K562 (cell line): ENCODE measurements at regions of chr19 and their contacts with region 1.

Region 1: GRCh38 chr19:42563352-42564210 is 31.1 kb downstream of the CEACAM8 start:
- DNase-seq: peak; percentile 45 to 66 (median 63)
- ATAC-seq: peak; percentile 93
- H3K4me3 ChIP-seq: no peak overlapping the region
- H3K27ac ChIP-seq: no peak overlapping the region
- H3K4me1 ChIP-seq: no peaks in the 10 kb centered on the region
- H3K27me3 ChIP-seq: no peaks in the 10 kb centered on the region
- CTCF ChIP-seq: peak; percentile 69 to 71 (median 70)
- EP300 ChIP-seq: no peak
- POLR2A ChIP-seq: no peak
- RAD21 ChIP-seq: peak; percentile 17 to 57; a peak in 2 of 4 replicates

Region 2: DNA sequence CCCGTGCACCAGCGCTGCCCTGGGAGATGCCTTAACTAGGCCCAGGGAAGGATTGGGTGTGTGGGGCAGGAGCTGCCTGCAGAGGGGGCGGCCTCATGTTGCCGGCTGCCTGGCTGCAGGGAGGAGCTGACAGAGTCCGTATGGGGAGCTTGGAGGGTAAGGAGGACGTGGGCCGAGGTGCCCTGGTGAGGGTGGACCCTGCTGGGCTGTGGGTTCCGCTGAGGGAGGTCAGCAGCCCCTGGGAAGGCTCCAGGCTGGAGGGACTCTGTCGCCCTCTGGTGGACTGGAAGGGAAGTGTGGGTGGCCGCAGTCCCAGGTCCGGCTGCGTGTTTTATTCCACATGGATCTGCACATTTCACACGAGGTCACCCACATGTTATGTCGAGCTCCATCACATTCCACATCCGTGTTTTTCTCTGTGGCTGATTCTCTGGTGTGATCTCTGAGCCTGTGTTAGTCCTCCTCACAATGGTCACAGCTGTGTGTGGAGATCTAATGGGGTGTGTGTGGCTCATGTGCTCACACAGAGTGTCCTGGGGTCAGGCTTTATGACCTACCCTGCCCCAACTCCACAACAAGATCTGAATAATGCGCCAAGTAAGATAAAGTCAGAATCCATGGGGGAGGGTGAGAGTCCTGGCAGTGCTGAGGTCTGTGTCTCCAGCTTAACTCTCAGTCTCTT is 33.0 kb after region 1 on chr19:
- CTCF ChIA-PET with region 1: interaction called, 4 read pairs
- POLR2A ChIA-PET with region 1: no interaction called
- in situ Hi-C with region 1: no loop called
- intact Hi-C with region 1: loop called (anchors 1 kb)
- DNase-seq: peak; percentile 47 to 78 (median 68)
- ATAC-seq: peak; percentile 95
- H3K4me3 ChIP-seq: no peak overlapping the region
- H3K27ac ChIP-seq: no peak overlapping the region
- H3K4me1 ChIP-seq: peaks cover 0 to 5% of the 10 kb centered on the region in 2 experiments; a peak in 1 of 5 replicates
- H3K27me3 ChIP-seq: peaks cover 0 to 4% of the 10 kb centered on the region in 2 experiments; a peak in 1 of 5 replicates
- CTCF ChIP-seq: peak; percentile 81 to 92 (median 84)
- EP300 ChIP-seq: no peak
- POLR2A ChIP-seq: no peak
- RAD21 ChIP-seq: peak; percentile 17 to 66; a peak in 2 of 4 replicates